ENCODE measurements at regions of chr5 and their contacts with region 1.

Region 1: DNA sequence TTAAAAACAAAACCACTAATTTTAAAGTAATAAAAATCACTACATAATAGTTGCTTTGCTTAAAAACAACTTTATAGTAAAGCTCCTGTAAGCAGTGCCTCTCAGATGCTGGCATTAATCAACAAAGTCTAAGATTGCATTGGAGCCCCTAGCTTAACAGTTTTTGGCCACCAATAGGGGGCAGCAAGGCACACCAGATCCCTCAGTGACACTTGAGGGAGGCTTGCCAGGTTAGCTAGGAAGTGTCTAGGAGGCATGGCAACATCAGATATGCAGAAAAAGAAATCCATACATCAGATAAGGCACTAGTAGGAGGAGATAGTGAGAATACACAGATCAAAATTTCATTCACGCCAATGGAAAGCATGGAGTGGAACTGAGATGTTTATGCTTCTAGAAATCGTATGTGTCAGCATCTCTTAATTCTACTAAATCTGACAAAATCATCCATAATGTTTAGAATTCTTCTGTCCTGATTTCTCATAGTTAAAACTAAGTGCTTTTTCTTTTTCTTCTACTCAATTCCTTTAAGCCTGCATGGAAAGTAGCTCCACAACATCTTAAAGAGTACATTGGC is 73.6 kb upstream of the PAM start:
- DNase-seq: peak; percentile 85
- H3K4me3 ChIP-seq: no peak overlapping the region
- H3K27ac ChIP-seq: no peak overlapping the region
- H3K4me1 ChIP-seq: no peaks in the 10 kb centered on the region
- H3K27me3 ChIP-seq: peaks cover 4 to 8% of the 10 kb centered on the region in 2 experiments
- CTCF ChIP-seq: peak; percentile 83 to 86
- POLR2A ChIP-seq: no peak

Region 2: GRCh38 chr5:102715082-102715819 is 33.8 kb after region 1 on chr5:
- CTCF ChIA-PET with region 1: interaction called, 10 read pairs
- POLR2A ChIA-PET with region 1: no interaction called
- dilution Hi-C with region 1: no loop called
- intact Hi-C with region 1: no loop called
- DNase-seq: peak; percentile 77
- H3K4me3 ChIP-seq: no peak overlapping the region
- H3K27ac ChIP-seq: no peak overlapping the region
- H3K4me1 ChIP-seq: peaks cover 15% of the 10 kb centered on the region
- H3K27me3 ChIP-seq: no peaks in the 10 kb centered on the region
- CTCF ChIP-seq: no peak
- POLR2A ChIP-seq: no peak

Region 3: GRCh38 chr5:102792705-102793104 is 111.2 kb after region 1 on chr5:
- CTCF ChIA-PET with region 1: interaction called, 35 read pairs
- POLR2A ChIA-PET with region 1: no interaction called
- dilution Hi-C with region 1: no loop called
- intact Hi-C with region 1: loop called (anchors 1 kb)
- DNase-seq: peak; percentile 33
- H3K4me3 ChIP-seq: no peak overlapping the region
- H3K27ac ChIP-seq: no peak overlapping the region
- H3K4me1 ChIP-seq: no peaks in the 10 kb centered on the region
- H3K27me3 ChIP-seq: no peaks in the 10 kb centered on the region
- CTCF ChIP-seq: peak; percentile 17
- POLR2A ChIP-seq: no peak

Region 4: GRCh38 chr5:102865510-102866236 is 184.2 kb after region 1 on chr5:
- CTCF ChIA-PET with region 1: interaction called, 19 read pairs
- POLR2A ChIA-PET with region 1: no interaction called
- dilution Hi-C with region 1: no loop called
- intact Hi-C with region 1: loop called (anchors 2 kb)
- DNase-seq: peak; percentile 80
- H3K4me3 ChIP-seq: peak overlapping the region; percentile 55 to 88 (median 60)
- H3K27ac ChIP-seq: peak overlapping the region; percentile 72
- H3K4me1 ChIP-seq: peaks cover 34% of the 10 kb centered on the region
- H3K27me3 ChIP-seq: no peaks in the 10 kb centered on the region
- CTCF ChIP-seq: no peak
- POLR2A ChIP-seq: peak; percentile 50

Region 5: DNA sequence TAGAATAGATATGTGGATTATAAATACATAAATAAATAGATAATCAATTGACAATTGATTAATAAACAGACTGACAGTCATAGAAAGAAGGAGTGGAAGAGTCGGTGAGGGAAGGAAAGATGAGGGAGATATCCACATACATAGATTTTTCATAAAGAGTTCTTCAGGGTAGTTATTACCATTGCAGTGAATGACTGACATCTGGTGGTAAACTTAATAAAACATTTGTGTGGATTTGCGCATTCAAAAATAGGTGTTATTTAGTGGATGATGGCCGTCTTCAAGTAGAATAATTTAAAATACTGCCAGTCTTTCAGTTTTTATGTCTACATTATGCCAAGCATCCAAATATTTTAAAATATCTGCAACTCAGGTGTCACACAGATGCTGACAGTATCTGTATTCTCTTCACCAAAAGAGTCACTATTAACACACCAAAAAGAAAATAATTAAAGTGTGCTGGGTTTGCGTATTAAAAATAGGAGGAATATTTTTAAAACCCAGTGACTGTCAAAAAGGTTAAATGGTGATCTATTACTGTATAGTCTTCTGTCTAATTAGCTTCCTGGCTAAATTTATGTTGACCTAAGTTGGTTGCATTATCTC is 359.7 kb after region 1 on chr5:
- CTCF ChIA-PET with region 1: interaction called, 69 read pairs
- POLR2A ChIA-PET with region 1: no interaction called
- dilution Hi-C with region 1: no loop called
- intact Hi-C with region 1: loop called (anchors 1 kb)
- DNase-seq: peak; percentile 71
- H3K4me3 ChIP-seq: no peak overlapping the region
- H3K27ac ChIP-seq: no peak overlapping the region
- H3K4me1 ChIP-seq: no peaks in the 10 kb centered on the region
- H3K27me3 ChIP-seq: no peaks in the 10 kb centered on the region
- CTCF ChIP-seq: peak; percentile 8 to 30
- POLR2A ChIP-seq: no peak

Region 6: GRCh38 chr5:104611135-104611767 is 1929.8 kb after region 1 on chr5:
- CTCF ChIA-PET with region 1: no interaction called
- POLR2A ChIA-PET with region 1: no interaction called
- dilution Hi-C with region 1: no loop called
- intact Hi-C with region 1: no loop called
- DNase-seq: peak; percentile 3
- H3K4me3 ChIP-seq: no peak overlapping the region
- H3K27ac ChIP-seq: no peak overlapping the region
- H3K4me1 ChIP-seq: no peaks in the 10 kb centered on the region
- H3K27me3 ChIP-seq: no peaks in the 10 kb centered on the region
- CTCF ChIP-seq: no peak
- POLR2A ChIP-seq: no peak